ENCODE measurements at regions of chr12 and their contacts with region 1.

Region 1: GRCh38 chr12:77925536-77926108 is 94.9 kb downstream of the NAV3 start:
- DNase-seq: peak; percentile 92
- H3K4me3 ChIP-seq: no peak overlapping the region
- H3K27ac ChIP-seq: no peak overlapping the region
- H3K4me1 ChIP-seq: no peaks in the 10 kb centered on the region
- H3K27me3 ChIP-seq: no peaks in the 10 kb centered on the region
- CTCF ChIP-seq: peak; percentile 91 to 99
- POLR2A ChIP-seq: no peak

Region 2: DNA sequence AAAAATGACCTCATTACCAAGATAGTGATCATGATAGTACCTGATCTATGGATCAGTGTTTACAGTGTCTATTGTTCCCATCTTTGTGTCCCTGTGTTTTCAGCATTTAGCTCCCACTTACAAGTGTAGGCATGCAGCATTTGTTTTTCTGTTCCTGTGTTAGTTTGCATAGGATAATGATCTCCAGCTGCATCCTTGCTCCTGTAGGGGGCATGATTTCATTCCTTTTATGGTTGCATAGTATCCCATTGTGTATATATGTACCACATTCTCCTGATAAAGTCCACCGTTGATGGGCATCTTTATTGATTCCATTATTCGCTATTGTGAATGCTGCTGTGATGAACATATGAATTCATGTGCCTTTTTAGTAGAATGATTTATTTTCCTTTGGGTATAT is 310.3 kb before region 1 on chr12:
- CTCF ChIA-PET with region 1: interaction called, 5 read pairs
- POLR2A ChIA-PET with region 1: no interaction called
- dilution Hi-C with region 1: no loop called
- intact Hi-C with region 1: loop called (anchors 5 kb)
- DNase-seq: peak; percentile 8
- H3K4me3 ChIP-seq: no peak overlapping the region
- H3K27ac ChIP-seq: no peak overlapping the region
- H3K4me1 ChIP-seq: no peaks in the 10 kb centered on the region
- H3K27me3 ChIP-seq: no peaks in the 10 kb centered on the region
- CTCF ChIP-seq: peak in 1 of 2 donors; percentile 24
- POLR2A ChIP-seq: no peak

Region 3: DNA sequence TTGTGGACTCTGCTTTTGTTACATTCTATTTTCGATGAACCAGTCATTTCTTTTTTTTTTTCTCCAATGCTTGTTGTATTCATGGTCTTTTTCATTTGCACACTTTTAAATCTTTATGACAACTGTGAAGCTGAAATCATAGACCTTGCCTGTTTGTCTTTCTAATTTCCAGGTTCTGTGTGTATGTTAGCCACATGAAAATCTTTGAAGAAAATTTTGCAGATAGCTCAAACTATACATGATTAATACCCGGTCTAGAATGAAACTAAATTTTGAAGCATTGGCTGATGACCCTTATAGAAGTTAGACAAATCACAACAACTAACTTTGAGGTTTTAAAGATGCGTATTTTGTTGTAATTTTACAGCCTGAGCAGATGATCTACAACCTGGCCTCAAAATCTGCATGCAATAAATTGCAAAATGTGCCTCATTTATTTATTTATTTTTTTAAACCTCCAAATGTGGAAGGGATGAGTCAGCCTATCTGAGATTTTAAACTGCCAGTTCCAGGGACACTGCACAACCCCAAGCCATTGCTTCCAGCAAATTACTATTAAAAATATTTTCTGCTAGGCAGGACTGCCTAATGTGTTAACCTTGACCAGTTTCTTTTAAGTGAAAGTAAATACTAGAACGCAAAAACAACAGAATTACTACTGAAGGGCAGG is 191.3 kb before region 1 on chr12:
- CTCF ChIA-PET with region 1: interaction called, 30 read pairs
- POLR2A ChIA-PET with region 1: no interaction called
- dilution Hi-C with region 1: no loop called
- intact Hi-C with region 1: no loop called
- DNase-seq: no peak
- H3K4me3 ChIP-seq: no peak overlapping the region
- H3K27ac ChIP-seq: no peak overlapping the region
- H3K4me1 ChIP-seq: no peaks in the 10 kb centered on the region
- H3K27me3 ChIP-seq: no peaks in the 10 kb centered on the region
- CTCF ChIP-seq: no peak
- POLR2A ChIP-seq: no peak

Region 4: DNA sequence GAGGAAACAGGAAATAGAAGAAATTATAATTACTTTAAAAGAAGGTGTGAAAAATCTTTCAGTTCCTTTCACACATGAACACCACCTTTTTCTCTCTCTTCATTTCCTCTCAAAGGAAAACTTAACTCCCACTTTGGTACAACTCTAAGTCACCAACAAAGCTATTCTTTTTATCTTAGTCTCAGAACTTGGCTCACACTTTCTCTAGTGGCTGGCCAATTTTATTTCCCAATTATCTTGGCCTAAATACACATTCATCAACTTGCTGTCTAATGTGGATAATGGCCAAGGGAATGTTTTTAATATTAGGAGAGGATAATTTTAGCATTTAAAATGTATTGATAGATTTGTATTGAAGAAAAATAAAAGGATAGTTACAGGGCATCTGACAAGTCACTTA is 159.4 kb before region 1 on chr12:
- CTCF ChIA-PET with region 1: interaction called, 11 read pairs
- POLR2A ChIA-PET with region 1: no interaction called
- dilution Hi-C with region 1: no loop called
- intact Hi-C with region 1: no loop called
- DNase-seq: no peak
- H3K4me3 ChIP-seq: no peak overlapping the region
- H3K27ac ChIP-seq: no peak overlapping the region
- H3K4me1 ChIP-seq: peaks cover 5% of the 10 kb centered on the region
- H3K27me3 ChIP-seq: no peaks in the 10 kb centered on the region
- CTCF ChIP-seq: no peak
- POLR2A ChIP-seq: no peak

Region 5: GRCh38 chr12:77888611-77889010 is 37.0 kb before region 1 on chr12:
- CTCF ChIA-PET with region 1: interaction called, 7 read pairs
- POLR2A ChIA-PET with region 1: no interaction called
- dilution Hi-C with region 1: no loop called
- intact Hi-C with region 1: loop called (anchors 2 kb)
- DNase-seq: peak; percentile 97
- H3K4me3 ChIP-seq: no peak overlapping the region
- H3K27ac ChIP-seq: peak overlapping the region; percentile 39
- H3K4me1 ChIP-seq: peaks cover 15% of the 10 kb centered on the region
- H3K27me3 ChIP-seq: no peaks in the 10 kb centered on the region
- CTCF ChIP-seq: no peak
- POLR2A ChIP-seq: no peak